ENCODE measurements at regions of chr1 and their contacts with region 1.

Region 1: GRCh38 chr1:170410401-170411166 is 121.4 kb upstream of the GORAB start:
- DNase-seq: no peak
- ATAC-seq: peak; percentile 77
- H3K4me3 ChIP-seq: no peak overlapping the region
- H3K27ac ChIP-seq: peak overlapping the region in 1 of 2 donors; percentile 51
- H3K4me1 ChIP-seq: peaks cover 1 to 3% of the 10 kb centered on the region in 2 donors
- H3K27me3 ChIP-seq: no peaks in the 10 kb centered on the region

Region 2: DNA sequence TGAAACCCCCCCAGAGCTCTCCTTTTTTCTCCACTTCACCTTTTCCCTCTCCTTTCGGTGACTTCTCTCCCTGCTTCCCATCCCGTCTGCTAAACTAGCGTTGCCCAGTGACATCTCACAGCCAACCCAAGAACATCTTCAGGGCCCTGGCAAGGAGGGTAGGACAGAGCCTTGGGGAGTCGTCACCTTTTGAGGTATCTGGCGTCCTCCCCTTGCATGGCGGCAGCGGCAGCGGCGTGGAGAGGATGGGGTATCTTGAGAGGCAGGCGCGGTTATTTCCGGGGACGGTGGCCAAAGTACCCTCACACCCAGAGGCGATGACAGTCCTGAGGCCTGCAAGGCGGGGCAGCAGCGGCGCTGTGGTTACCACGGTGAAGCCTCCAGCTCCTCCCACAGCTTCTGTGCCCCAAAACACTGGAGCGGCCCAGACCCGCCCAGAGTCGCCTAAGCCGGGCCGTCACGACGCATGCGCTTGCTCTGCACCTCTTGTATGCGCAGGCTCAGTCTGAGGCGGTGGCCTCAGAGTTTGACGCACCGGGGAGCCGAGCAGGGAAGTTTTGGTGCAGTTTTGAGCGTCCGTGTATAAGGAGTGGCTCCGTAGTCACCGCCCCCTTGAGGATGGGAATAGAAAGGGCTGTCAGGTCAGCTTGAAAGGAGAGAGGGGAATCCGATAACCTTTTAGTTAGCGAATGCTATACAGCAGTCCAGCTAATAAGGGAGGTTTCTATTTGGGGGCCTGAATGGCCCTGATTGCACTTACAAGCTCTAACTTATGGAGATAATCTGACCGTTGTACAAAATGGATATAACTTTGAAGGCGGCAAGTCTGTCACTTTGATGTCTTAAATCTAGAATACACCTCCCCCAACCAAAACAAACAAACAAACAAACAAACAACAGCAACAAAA is 336.1 kb before region 1 on chr1 and contains the start of gene KIFAP3:
- intact Hi-C with region 1: loop called in 1 of 2 experiments (anchors 10 kb)
- DNase-seq: peak; percentile 99
- ATAC-seq: peak; percentile 100
- H3K4me3 ChIP-seq: peak within 1 kb of the TSS; percentile 88 to 99
- H3K27ac ChIP-seq: peak within 1 kb of the TSS; percentile 72 to 76
- H3K4me1 ChIP-seq: peaks cover 0 to 3% of the 10 kb centered on the region in 2 donors
- H3K27me3 ChIP-seq: no peaks in the 10 kb centered on the region
- total RNA-seq, gene KIFAP3: 36.0 to 38.7 TPM

Region 3: GRCh38 chr1:170309389-170310013 is 101.1 kb before region 1 on chr1:
- intact Hi-C with region 1: loop called in 1 of 2 experiments (anchors 5 kb)
- DNase-seq: peak in 1 of 2 donors; percentile 67
- ATAC-seq: peak; percentile 80
- H3K4me3 ChIP-seq: no peak overlapping the region
- H3K27ac ChIP-seq: peak overlapping the region in 1 of 2 donors; percentile 47
- H3K4me1 ChIP-seq: peaks cover 0 to 10% of the 10 kb centered on the region in 2 donors
- H3K27me3 ChIP-seq: no peaks in the 10 kb centered on the region

Region 4: GRCh38 chr1:170471398-170472053 is 60.9 kb after region 1 on chr1:
- intact Hi-C with region 1: loop called in 1 of 2 experiments (anchors 5 kb)
- DNase-seq: no peak
- ATAC-seq: no peak
- H3K4me3 ChIP-seq: no peak overlapping the region
- H3K27ac ChIP-seq: no peak overlapping the region
- H3K4me1 ChIP-seq: no peaks in the 10 kb centered on the region
- H3K27me3 ChIP-seq: no peaks in the 10 kb centered on the region

Region 5: GRCh38 chr1:170531758-170532657 is 121.4 kb after region 1 on chr1 and contains the start of gene GORAB:
- intact Hi-C with region 1: loop called in 1 of 2 experiments (anchors 5 kb)
- DNase-seq: peak; percentile 96 to 97
- ATAC-seq: peak; percentile 97
- H3K4me3 ChIP-seq: peak within 1 kb of the TSS; percentile 78 to 87
- H3K27ac ChIP-seq: peak within 1 kb of the TSS; percentile 83 to 97
- H3K4me1 ChIP-seq: peaks cover 0 to 5% of the 10 kb centered on the region in 2 donors
- H3K27me3 ChIP-seq: no peaks in the 10 kb centered on the region
- total RNA-seq, gene GORAB: 16.1 to 18.4 TPM

Measured in aorta (tissue), 5 donors.